Adrenal gland (tissue), 19 donors: ENCODE measurements at regions of chr3 and their contacts with region 1.

Region 1: GRCh38 chr3:179147873-179148615 is at the start of gene PIK3CA:
- DNase-seq: peak; percentile 95 to 99 (median 97)
- H3K4me3 ChIP-seq: peak within 1 kb of the TSS; percentile 92 to 98 (median 96)
- H3K27ac ChIP-seq: peak within 1 kb of the TSS; percentile 79 to 99 (median 97)
- H3K4me1 ChIP-seq: peaks cover 0 to 33% of the 10 kb centered on the region in 2 donors
- H3K27me3 ChIP-seq: no peaks in the 10 kb centered on the region
- CTCF ChIP-seq: no peak
- POLR2A ChIP-seq: peak; percentile 8 to 90
- total RNA-seq, gene PIK3CA: 11.4 to 52.4 (median 28.0) TPM

Region 2: GRCh38 chr3:178117641-178118040 is 1030.4 kb before region 1 on chr3:
- intact Hi-C with region 1: no loop called
- DNase-seq: no peak
- H3K4me3 ChIP-seq: no peak overlapping the region
- H3K27ac ChIP-seq: no peak overlapping the region
- H3K4me1 ChIP-seq: no peaks in the 10 kb centered on the region
- H3K27me3 ChIP-seq: no peaks in the 10 kb centered on the region
- CTCF ChIP-seq: no peak
- POLR2A ChIP-seq: no peak

Region 3: DNA sequence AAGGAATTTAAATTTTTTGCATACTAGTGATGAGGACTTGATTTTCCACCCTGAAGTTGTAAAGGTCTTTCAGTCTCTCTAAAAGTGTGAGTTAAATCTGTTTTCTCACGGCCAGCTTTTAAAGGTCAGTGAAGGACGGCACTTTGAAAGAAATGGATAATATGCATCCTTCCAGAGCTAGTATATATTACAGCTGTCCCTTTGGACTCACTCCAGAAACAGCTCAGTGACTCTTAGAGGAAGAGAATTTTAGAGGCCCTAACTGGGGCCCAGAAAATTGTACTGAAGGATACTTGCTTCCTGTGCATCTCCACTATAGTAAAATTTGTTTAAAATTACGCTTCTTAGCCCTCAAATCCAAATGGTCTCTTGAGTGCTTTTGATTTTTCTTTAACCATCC is 41.7 kb after region 1 on chr3:
- intact Hi-C with region 1: loop called in 1 of 2 experiments (anchors 5 kb)
- DNase-seq: peak in 1 of 7 donors; percentile 11
- H3K4me3 ChIP-seq: no peak overlapping the region
- H3K27ac ChIP-seq: no peak overlapping the region
- H3K4me1 ChIP-seq: peaks cover 10 to 29% of the 10 kb centered on the region in 2 donors
- H3K27me3 ChIP-seq: no peaks in the 10 kb centered on the region
- CTCF ChIP-seq: no peak
- POLR2A ChIP-seq: no peak

Region 4: GRCh38 chr3:179309225-179310078 is 161.4 kb after region 1 on chr3:
- intact Hi-C with region 1: loop called in 1 of 2 experiments (anchors 10 kb)
- DNase-seq: no peak
- H3K4me3 ChIP-seq: no peak overlapping the region
- H3K27ac ChIP-seq: no peak overlapping the region
- H3K4me1 ChIP-seq: no peaks in the 10 kb centered on the region
- H3K27me3 ChIP-seq: no peaks in the 10 kb centered on the region
- CTCF ChIP-seq: no peak
- POLR2A ChIP-seq: no peak

Region 5: DNA sequence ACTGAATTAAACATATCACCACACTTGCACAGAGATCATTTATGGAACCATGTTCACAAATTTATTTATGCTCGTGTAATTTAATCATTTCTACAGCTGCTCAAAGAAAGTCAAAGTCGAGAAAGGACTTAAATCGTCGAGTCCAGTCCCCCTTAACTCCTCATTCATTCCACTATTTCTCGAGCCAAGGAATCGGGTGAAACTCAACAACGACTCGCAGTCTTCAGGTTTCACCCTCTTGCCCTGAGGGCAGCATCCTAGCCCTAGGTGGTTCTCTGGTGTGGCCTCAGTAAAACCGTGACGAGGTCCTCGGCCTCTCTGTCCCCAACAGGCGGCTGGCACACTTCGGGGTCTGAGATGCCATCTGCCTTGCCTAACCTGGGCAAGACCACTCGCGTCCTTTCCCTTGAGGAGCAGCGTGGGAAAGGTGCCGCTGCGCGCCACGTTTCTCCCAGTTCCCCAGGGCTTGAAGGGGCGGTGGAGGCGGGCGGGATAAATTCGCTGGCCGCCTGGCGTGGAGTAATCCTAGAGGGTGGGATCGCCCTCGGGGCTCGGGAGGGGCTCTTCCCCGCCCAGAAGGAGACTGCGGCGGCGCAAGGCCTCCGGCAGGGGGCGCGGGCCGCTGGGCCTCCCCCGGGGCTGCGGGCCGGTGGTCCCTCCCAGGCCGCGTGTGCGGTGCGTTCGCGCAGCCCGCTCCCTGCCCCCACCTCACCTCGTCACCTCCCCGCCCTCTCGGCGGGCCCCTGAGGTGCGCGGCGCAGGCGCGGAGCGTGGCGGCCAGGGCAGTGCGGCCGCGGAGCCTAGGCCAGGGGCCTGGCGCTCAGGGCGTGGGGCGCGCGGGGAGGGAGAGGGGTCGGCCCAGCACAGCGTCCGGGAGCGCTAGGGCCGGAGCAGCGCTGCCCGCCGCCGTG is 174.5 kb after region 1 on chr3 and contains the start of gene ZNF639:
- intact Hi-C with region 1: loop called (anchors 5 to 10 kb)
- DNase-seq: peak; percentile 84 to 88 (median 85)
- H3K4me3 ChIP-seq: peak within 1 kb of the TSS; percentile 62 to 96 (median 73)
- H3K27ac ChIP-seq: peak within 1 kb of the TSS; percentile 79 to 99 (median 95)
- H3K4me1 ChIP-seq: peaks cover 14 to 31% of the 10 kb centered on the region in 2 donors
- H3K27me3 ChIP-seq: no peaks in the 10 kb centered on the region
- CTCF ChIP-seq: peak; percentile 34 to 90 (median 70)
- POLR2A ChIP-seq: peak; percentile 75 to 80
- total RNA-seq, gene ZNF639: 25.9 to 53.4 (median 44.7) TPM